ENCODE measurements at regions of chr14 and their contacts with region 1.

Region 1: DNA sequence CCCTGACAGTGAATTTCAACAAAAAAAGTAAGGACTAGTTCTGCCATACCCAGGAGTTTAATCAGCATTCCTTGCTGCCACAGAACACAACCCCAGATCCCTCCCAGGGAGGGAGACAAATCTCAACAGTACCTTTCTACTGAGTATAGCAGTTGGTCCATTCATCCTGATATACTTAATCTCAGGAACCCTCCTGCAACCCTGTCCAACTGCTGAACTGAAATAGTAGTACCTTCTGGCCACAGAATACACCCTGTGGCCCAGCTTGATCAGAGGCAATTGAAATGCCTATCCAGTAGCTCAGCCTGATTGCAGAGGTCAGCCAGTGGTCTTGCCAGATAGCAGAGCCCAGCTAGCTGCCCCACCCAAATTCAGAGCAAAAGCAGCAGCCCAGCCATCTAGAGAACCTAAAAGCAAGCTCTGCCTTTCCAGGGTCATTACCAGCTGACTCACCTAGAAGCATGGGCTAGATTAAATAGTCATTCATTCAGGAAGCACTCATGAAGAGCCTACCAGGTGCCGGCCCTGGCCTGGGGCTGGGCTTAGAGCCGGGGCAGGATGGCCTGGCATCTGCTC is 40.0 kb upstream of the RHOJ start:
- DNase-seq: no peak
- ATAC-seq: no peak
- H3K4me3 Mint-ChIP-seq: no peak overlapping the region
- H3K27ac Mint-ChIP-seq: no peak overlapping the region
- H3K4me1 Mint-ChIP-seq: no peaks in the 10 kb centered on the region
- H3K27me3 Mint-ChIP-seq: no peaks in the 10 kb centered on the region

Region 2: DNA sequence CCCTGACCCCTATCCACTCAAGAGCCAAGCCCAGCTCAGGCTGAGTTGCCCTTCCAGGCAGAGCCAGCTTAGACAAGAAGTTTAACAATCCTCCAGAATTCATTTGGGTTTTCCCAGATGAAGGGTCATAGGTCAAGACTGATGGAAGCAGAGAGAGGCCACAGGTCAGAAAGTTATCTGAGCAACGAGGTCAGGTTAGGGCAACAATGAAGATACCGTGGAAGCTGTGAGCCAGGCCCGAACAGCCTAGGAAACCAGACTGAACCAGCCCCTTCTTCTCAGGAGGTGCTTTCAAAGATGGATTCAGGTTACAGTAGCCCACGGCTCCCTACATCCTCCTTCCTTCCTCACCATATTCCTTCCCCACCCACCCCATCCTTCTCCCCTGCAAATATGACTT is 93.1 kb after region 1 on chr14:
- CTCF ChIA-PET with region 1: no interaction called
- POLR2A ChIA-PET with region 1: interaction called, 13 read pairs
- intact Hi-C with region 1: no loop called
- DNase-seq: no peak
- ATAC-seq: no peak
- H3K4me3 Mint-ChIP-seq: no peak overlapping the region
- H3K27ac Mint-ChIP-seq: no peak overlapping the region
- H3K4me1 Mint-ChIP-seq: no peaks in the 10 kb centered on the region
- H3K27me3 Mint-ChIP-seq: peaks cover 11% of the 10 kb centered on the region